ENCODE measurements at regions of chr16 and their contacts with region 1.

Region 1: GRCh38 chr16:21184834-21185233 is 26.4 kb downstream of the LDAF1 start:
- DNase-seq: peak in 2 of 14 experiments; percentile 4 to 31
- ATAC-seq: no peak
- H3K4me3 ChIP-seq: no peak overlapping the region
- H3K4me3 Mint-ChIP-seq: no peak overlapping the region
- H3K27ac ChIP-seq: no peak overlapping the region
- H3K27ac Mint-ChIP-seq: no peak overlapping the region
- H3K4me1 ChIP-seq: peaks cover 5% of the 10 kb centered on the region
- H3K4me1 Mint-ChIP-seq: peaks cover 5% of the 10 kb centered on the region
- H3K27me3 ChIP-seq: no peaks in the 10 kb centered on the region
- H3K27me3 Mint-ChIP-seq: peaks cover 5% of the 10 kb centered on the region
- CTCF ChIP-seq: no peak

Region 2: GRCh38 chr16:21061747-21062146 is 123.1 kb before region 1 on chr16:
- CTCF ChIA-PET with region 1: no interaction called
- POLR2A ChIA-PET with region 1: no interaction called
- intact Hi-C with region 1: no loop called
- DNase-seq: no peak
- ATAC-seq: no peak
- H3K4me3 ChIP-seq: no peak overlapping the region
- H3K4me3 Mint-ChIP-seq: no peak overlapping the region
- H3K27ac ChIP-seq: no peak overlapping the region
- H3K27ac Mint-ChIP-seq: no peak overlapping the region
- H3K4me1 ChIP-seq: no peaks in the 10 kb centered on the region
- H3K4me1 Mint-ChIP-seq: no peaks in the 10 kb centered on the region
- H3K27me3 ChIP-seq: peaks cover 0 to 3% of the 10 kb centered on the region in 2 experiments
- H3K27me3 Mint-ChIP-seq: peaks cover 13% of the 10 kb centered on the region
- CTCF ChIP-seq: no peak

Region 3: DNA sequence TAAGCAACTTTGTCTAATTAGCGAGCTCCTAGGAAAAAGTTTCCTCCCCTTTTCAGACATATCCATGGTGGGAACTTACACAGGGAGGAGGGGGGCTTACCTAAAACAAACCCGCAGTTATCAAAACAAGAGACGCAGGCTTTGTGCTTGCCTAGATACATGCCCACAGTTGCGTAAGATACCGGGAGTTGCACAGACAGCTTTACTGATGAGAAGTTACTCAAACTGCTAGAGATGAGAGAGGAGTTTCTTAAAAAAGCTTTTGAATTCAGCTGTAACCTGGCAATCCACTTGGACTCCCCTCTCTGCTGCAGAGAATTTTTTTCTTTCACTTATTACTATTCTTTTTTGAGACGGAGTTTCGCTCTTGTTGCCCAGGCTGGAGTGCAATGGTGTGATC is 33.3 kb after region 1 on chr16:
- CTCF ChIA-PET with region 1: no interaction called
- POLR2A ChIA-PET with region 1: no interaction called
- intact Hi-C with region 1: no loop called
- DNase-seq: no peak
- ATAC-seq: no peak
- H3K4me3 ChIP-seq: no peak overlapping the region
- H3K4me3 Mint-ChIP-seq: no peak overlapping the region
- H3K27ac ChIP-seq: no peak overlapping the region
- H3K27ac Mint-ChIP-seq: no peak overlapping the region
- H3K4me1 ChIP-seq: no peaks in the 10 kb centered on the region
- H3K4me1 Mint-ChIP-seq: no peaks in the 10 kb centered on the region
- H3K27me3 ChIP-seq: no peaks in the 10 kb centered on the region
- H3K27me3 Mint-ChIP-seq: peaks cover 43% of the 10 kb centered on the region
- CTCF ChIP-seq: no peak

Region 4: GRCh38 chr16:21300309-21301167 is 115.7 kb after region 1 on chr16:
- CTCF ChIA-PET with region 1: no interaction called
- POLR2A ChIA-PET with region 1: no interaction called
- intact Hi-C with region 1: loop called in 1 of 2 experiments (anchors 10 kb)
- DNase-seq: peak in 9 of 14 experiments; percentile 7 to 78 (median 15)
- ATAC-seq: peak; percentile 67
- H3K4me3 ChIP-seq: peak overlapping the region; percentile 62
- H3K4me3 Mint-ChIP-seq: peak overlapping the region; percentile 94
- H3K27ac ChIP-seq: no peak overlapping the region
- H3K27ac Mint-ChIP-seq: no peak overlapping the region
- H3K4me1 ChIP-seq: peaks cover 21% of the 10 kb centered on the region
- H3K4me1 Mint-ChIP-seq: peaks cover 30% of the 10 kb centered on the region
- H3K27me3 ChIP-seq: peaks cover 0 to 3% of the 10 kb centered on the region in 2 experiments
- H3K27me3 Mint-ChIP-seq: peaks cover 36% of the 10 kb centered on the region
- CTCF ChIP-seq: no peak

Region 5: GRCh38 chr16:22321339-22322001 is 1136.6 kb after region 1 on chr16:
- CTCF ChIA-PET with region 1: no interaction called
- POLR2A ChIA-PET with region 1: no interaction called
- intact Hi-C with region 1: loop called in 1 of 2 experiments (anchors 2 kb)
- DNase-seq: peak; percentile 54 to 89 (median 69)
- ATAC-seq: peak; percentile 81
- H3K4me3 ChIP-seq: no peak overlapping the region
- H3K4me3 Mint-ChIP-seq: no peak overlapping the region
- H3K27ac ChIP-seq: no peak overlapping the region
- H3K27ac Mint-ChIP-seq: peak overlapping the region; percentile 82
- H3K4me1 ChIP-seq: peaks cover 10% of the 10 kb centered on the region
- H3K4me1 Mint-ChIP-seq: peaks cover 11% of the 10 kb centered on the region
- H3K27me3 ChIP-seq: no peaks in the 10 kb centered on the region
- H3K27me3 Mint-ChIP-seq: no peaks in the 10 kb centered on the region
- CTCF ChIP-seq: peak; percentile 99

Region 6: DNA sequence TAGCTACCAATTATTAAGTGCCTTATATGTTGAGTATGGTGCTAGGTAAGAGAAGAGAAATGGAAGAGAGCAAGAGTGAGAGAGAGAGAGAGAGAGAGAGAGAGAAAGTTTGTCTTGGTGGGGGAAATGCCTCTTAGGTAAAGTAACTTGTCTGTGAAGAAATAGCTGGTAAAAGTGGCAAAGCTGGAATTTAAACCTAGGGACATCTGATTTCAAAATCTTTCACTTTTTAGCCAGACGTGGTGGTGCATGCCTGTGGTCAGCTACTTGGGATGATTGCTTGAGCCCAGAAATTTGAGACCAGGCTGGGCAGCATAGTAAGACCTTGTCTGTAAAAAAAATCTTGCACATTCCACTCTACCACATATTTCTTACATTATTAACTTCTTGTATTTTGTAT is 1212.6 kb after region 1 on chr16:
- CTCF ChIA-PET with region 1: no interaction called
- POLR2A ChIA-PET with region 1: no interaction called
- intact Hi-C with region 1: no loop called
- DNase-seq: no peak
- ATAC-seq: no peak
- H3K4me3 ChIP-seq: no peak overlapping the region
- H3K4me3 Mint-ChIP-seq: no peak overlapping the region
- H3K27ac ChIP-seq: no peak overlapping the region
- H3K27ac Mint-ChIP-seq: no peak overlapping the region
- H3K4me1 ChIP-seq: no peaks in the 10 kb centered on the region
- H3K4me1 Mint-ChIP-seq: peaks cover 3% of the 10 kb centered on the region
- H3K27me3 ChIP-seq: no peaks in the 10 kb centered on the region
- H3K27me3 Mint-ChIP-seq: no peaks in the 10 kb centered on the region
- CTCF ChIP-seq: no peak

Region 7: GRCh38 chr16:22684574-22685458 is 1500.0 kb after region 1 on chr16:
- CTCF ChIA-PET with region 1: no interaction called
- POLR2A ChIA-PET with region 1: no interaction called
- intact Hi-C with region 1: loop called in 1 of 2 experiments (anchors 2 kb)
- DNase-seq: no peak
- ATAC-seq: no peak
- H3K4me3 ChIP-seq: no peak overlapping the region
- H3K4me3 Mint-ChIP-seq: no peak overlapping the region
- H3K27ac ChIP-seq: no peak overlapping the region
- H3K27ac Mint-ChIP-seq: no peak overlapping the region
- H3K4me1 ChIP-seq: no peaks in the 10 kb centered on the region
- H3K4me1 Mint-ChIP-seq: peaks cover 4% of the 10 kb centered on the region
- H3K27me3 ChIP-seq: peaks cover 10 to 15% of the 10 kb centered on the region in 2 experiments
- H3K27me3 Mint-ChIP-seq: peaks cover 29% of the 10 kb centered on the region
- CTCF ChIP-seq: no peak